ENCODE measurements at regions of chr18 and their contacts with region 1.

Region 1: GRCh38 chr18:35407871-35408481 is 30.8 kb upstream of the ZNF396 start:
- DNase-seq: peak; percentile 63
- ATAC-seq: peak; percentile 92
- H3K4me3 ChIP-seq: no peak overlapping the region
- H3K27ac ChIP-seq: no peak overlapping the region
- H3K4me1 ChIP-seq: peaks cover 0 to 10% of the 10 kb centered on the region in 2 experiments; a peak in 1 of 4 replicates
- H3K27me3 ChIP-seq: no peaks in the 10 kb centered on the region
- CTCF ChIP-seq: peak; percentile 63 to 80 (median 66); a peak in 5 of 6 replicates
- POLR2A ChIP-seq: no peak
- RAD21 ChIP-seq: peak; percentile 91

Region 2: GRCh38 chr18:35397976-35398375 is 10.0 kb before region 1 on chr18:
- CTCF ChIA-PET with region 1: interaction called, 11 read pairs
- POLR2A ChIA-PET with region 1: no interaction called
- RAD21 ChIA-PET with region 1: no interaction called
- intact Hi-C with region 1: no loop called
- DNase-seq: no peak
- ATAC-seq: no peak
- H3K4me3 ChIP-seq: no peak overlapping the region
- H3K27ac ChIP-seq: no peak overlapping the region
- H3K4me1 ChIP-seq: no peaks in the 10 kb centered on the region
- H3K27me3 ChIP-seq: no peaks in the 10 kb centered on the region
- CTCF ChIP-seq: no peak
- POLR2A ChIP-seq: no peak
- RAD21 ChIP-seq: no peak

Region 3: DNA sequence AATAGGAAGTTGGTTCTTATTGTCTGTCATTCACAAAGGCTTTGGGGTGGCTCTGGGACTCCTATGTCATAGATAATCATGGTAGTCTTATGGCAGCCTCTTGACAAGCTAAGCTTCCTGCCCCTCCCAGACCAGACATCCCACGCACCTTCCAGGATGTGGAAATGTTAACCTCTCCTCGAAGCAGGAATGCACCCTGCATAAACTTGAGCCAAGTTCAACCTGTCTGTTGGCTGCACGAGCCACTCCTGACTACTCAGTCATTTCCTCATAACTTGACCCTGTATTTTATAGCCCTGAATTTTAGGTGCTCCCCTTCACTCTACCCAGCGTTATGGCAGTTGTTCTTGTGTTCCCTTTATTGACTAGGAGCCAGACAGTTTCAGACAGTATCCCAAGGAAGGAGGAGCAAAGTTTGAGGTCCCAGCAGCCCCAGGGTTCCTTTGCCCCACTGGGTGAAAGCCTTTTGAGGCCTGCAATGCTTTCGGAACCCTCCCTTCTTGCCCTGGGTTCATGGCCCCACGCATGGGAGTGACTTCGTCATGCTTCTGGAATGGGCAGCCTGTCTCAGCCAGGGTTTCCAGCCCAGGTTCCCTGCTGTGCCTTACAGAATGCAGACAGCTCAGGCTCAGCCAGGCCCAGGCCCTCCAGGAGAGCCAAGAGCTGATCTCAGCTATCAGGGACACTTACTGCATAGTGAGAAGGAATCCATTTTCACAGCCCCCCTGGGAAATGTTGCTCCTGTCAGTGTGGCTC is 105.4 kb after region 1 on chr18:
- CTCF ChIA-PET with region 1: interaction called, 7 read pairs
- POLR2A ChIA-PET with region 1: no interaction called
- RAD21 ChIA-PET with region 1: no interaction called
- intact Hi-C with region 1: loop called (anchors 5 kb)
- DNase-seq: peak; percentile 54
- ATAC-seq: peak; percentile 93
- H3K4me3 ChIP-seq: peak overlapping the region in 1 of 2 experiments; percentile 12; a peak in 1 of 4 replicates
- H3K27ac ChIP-seq: peak overlapping the region; percentile 51
- H3K4me1 ChIP-seq: peaks cover 16 to 38% of the 10 kb centered on the region in 2 experiments; a peak in 3 of 4 replicates
- H3K27me3 ChIP-seq: no peaks in the 10 kb centered on the region
- CTCF ChIP-seq: no peak
- POLR2A ChIP-seq: no peak
- RAD21 ChIP-seq: peak; percentile 18; the same call in 1 of the 2 replicates

Region 4: GRCh38 chr18:35703043-35703688 is 295.2 kb after region 1 on chr18:
- CTCF ChIA-PET with region 1: no interaction called
- POLR2A ChIA-PET with region 1: no interaction called
- RAD21 ChIA-PET with region 1: no interaction called
- intact Hi-C with region 1: loop called (anchors 10 kb)
- DNase-seq: no peak
- ATAC-seq: no peak
- H3K4me3 ChIP-seq: no peak overlapping the region
- H3K27ac ChIP-seq: no peak overlapping the region
- H3K4me1 ChIP-seq: no peaks in the 10 kb centered on the region
- H3K27me3 ChIP-seq: no peaks in the 10 kb centered on the region
- CTCF ChIP-seq: no peak
- POLR2A ChIP-seq: no peak
- RAD21 ChIP-seq: no peak

Region 5: DNA sequence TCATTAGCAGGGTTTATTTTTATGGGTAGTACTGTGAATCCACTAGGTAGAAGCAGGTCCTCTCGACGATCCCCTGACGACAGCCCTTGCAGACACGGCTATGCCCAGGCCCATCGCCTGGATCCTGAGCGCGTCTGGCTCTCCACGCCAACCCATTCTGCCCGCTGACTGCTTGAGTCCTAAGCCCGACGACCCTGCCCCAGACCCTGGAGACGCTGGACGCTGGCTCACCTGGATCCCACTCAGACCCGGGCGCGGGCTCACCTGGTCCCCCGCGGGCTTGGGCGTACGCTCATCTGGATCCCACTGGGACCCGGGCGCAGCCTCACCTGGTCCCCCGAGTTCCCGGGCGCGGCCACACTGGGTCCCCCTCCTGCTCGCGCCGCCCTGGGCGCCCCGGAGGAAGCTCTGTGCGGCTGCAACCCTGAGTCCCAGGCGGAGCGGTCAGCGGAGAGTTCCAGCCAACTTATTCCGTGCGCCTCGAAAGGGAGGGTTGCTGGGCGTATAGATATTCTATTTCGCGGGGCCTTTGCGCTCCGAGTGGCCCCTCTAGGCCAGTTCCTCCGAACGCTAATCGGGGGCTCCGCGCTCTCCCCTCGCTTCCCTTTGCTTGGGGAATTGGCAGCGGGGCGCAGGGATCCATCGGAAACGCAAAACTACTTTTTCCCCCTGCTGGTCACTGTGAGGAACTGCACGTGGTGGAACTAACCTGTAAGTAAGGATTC is 542.1 kb after region 1 on chr18:
- CTCF ChIA-PET with region 1: no interaction called
- POLR2A ChIA-PET with region 1: no interaction called
- RAD21 ChIA-PET with region 1: no interaction called
- intact Hi-C with region 1: loop called (anchors 10 kb)
- DNase-seq: no peak
- ATAC-seq: peak; percentile 91
- H3K4me3 ChIP-seq: peak overlapping the region; percentile 23 to 33
- H3K27ac ChIP-seq: no peak overlapping the region
- H3K4me1 ChIP-seq: no peaks in the 10 kb centered on the region
- H3K27me3 ChIP-seq: no peaks in the 10 kb centered on the region
- CTCF ChIP-seq: peak; percentile 54 to 89 (median 84); a peak in 5 of 6 replicates
- POLR2A ChIP-seq: no peak
- RAD21 ChIP-seq: peak; percentile 50